Calu3 (cell line): ENCODE measurements at regions of chr3 and their contacts with region 1.

Region 1: DNA sequence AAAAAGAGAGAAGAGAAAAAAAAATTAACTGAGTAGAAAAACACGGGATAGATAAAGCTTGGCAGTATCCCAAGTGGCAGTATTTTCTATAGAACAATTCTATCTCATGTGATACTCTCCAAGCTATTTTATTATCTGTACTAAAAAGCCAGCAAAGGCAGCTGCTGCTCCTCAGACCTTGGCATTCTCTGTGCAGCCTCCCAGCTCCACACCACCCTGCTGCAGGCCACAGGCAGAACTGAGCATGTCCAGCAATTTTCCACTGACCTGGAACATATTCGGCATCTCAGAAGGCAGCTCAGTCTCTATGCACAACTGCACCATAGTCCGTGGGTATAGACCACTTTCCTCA is 1161.4 kb downstream of the IGSF11 start:
- DNase-seq: no peak
- H3K4me3 Mint-ChIP-seq: no peak overlapping the region
- H3K27ac Mint-ChIP-seq: no peak overlapping the region
- H3K4me1 Mint-ChIP-seq: peaks cover 35% of the 10 kb centered on the region
- H3K27me3 Mint-ChIP-seq: no peaks in the 10 kb centered on the region
- CTCF ChIP-seq: no peak

Region 2: GRCh38 chr3:117761703-117762620 is 111.3 kb before region 1 on chr3:
- CTCF ChIA-PET with region 1: interaction called, 11 read pairs
- intact Hi-C with region 1: no loop called
- DNase-seq: no peak
- H3K4me3 Mint-ChIP-seq: no peak overlapping the region
- H3K27ac Mint-ChIP-seq: no peak overlapping the region
- H3K4me1 Mint-ChIP-seq: no peaks in the 10 kb centered on the region
- H3K27me3 Mint-ChIP-seq: peaks cover 11% of the 10 kb centered on the region
- CTCF ChIP-seq: no peak